ENCODE measurements at regions of chr9 and their contacts with region 1.

Region 1: DNA sequence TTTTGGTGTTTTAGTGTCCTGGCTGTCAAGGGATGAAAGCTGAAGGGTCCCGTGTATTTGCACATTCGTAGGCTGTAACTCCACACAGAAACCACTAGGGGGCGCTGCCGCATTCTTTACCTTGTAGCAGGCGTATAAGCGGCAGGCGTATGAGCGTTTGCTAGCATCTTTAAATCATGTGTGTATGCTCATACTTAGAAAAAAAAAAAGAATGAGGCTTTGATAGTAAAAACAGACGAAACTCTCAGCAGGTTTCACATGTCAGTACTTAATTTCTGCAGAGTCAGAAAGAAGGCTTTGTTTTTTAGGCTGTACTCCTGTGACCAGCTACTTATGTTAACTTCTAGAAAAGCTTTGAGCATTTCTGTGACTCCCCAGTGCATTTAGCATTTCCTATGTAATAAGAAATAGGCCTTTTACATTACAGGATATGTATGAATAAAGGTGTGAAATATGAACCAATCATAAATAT is 218.8 kb upstream of the ADAMTSL1 start:
- DNase-seq: peak; percentile 84
- H3K4me3 ChIP-seq: no peak overlapping the region
- H3K27ac ChIP-seq: no peak overlapping the region
- H3K4me1 ChIP-seq: peaks cover 2% of the 10 kb centered on the region
- H3K27me3 ChIP-seq: no peaks in the 10 kb centered on the region
- CTCF ChIP-seq: peak; percentile 76 to 81
- POLR2A ChIP-seq: no peak

Region 2: DNA sequence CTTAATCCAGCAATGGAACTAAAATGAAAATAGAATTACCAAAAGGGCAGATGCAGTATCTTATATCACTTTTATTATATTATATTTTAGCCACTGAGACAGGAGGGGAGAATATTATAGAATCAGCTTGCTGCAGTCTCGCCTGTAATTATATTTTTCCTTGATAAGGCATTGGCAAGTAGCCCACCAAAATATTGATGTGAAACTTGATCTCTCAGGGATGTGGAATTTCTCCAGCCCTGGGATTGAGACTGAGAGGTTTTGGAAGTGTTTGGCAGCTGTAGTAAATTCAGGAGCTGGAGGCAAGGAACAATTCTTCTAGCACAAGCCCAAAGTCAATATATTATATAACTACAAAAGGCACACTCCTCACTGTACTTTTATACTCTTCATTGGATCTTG is 76.6 kb after region 1 on chr9:
- CTCF ChIA-PET with region 1: interaction called, 14 read pairs
- POLR2A ChIA-PET with region 1: no interaction called
- dilution Hi-C with region 1: no loop called
- intact Hi-C with region 1: loop called (anchors 1 kb)
- DNase-seq: peak; percentile 99
- H3K4me3 ChIP-seq: no peak overlapping the region
- H3K27ac ChIP-seq: peak overlapping the region; percentile 85
- H3K4me1 ChIP-seq: peaks cover 40% of the 10 kb centered on the region
- H3K27me3 ChIP-seq: no peaks in the 10 kb centered on the region
- CTCF ChIP-seq: no peak
- POLR2A ChIP-seq: peak; percentile 57

Region 3: GRCh38 chr9:18437315-18438201 is 182.4 kb after region 1 on chr9:
- CTCF ChIA-PET with region 1: interaction called, 188 read pairs
- POLR2A ChIA-PET with region 1: interaction called, 4 read pairs
- dilution Hi-C with region 1: loop called (anchors 25 kb)
- intact Hi-C with region 1: loop called (anchors 1 kb)
- DNase-seq: peak; percentile 89
- H3K4me3 ChIP-seq: peak overlapping the region in 2 of 3 experiments; percentile 32 to 52
- H3K27ac ChIP-seq: peak overlapping the region; percentile 96
- H3K4me1 ChIP-seq: peaks cover 29% of the 10 kb centered on the region
- H3K27me3 ChIP-seq: no peaks in the 10 kb centered on the region
- CTCF ChIP-seq: no peak
- POLR2A ChIP-seq: no peak

Region 4: DNA sequence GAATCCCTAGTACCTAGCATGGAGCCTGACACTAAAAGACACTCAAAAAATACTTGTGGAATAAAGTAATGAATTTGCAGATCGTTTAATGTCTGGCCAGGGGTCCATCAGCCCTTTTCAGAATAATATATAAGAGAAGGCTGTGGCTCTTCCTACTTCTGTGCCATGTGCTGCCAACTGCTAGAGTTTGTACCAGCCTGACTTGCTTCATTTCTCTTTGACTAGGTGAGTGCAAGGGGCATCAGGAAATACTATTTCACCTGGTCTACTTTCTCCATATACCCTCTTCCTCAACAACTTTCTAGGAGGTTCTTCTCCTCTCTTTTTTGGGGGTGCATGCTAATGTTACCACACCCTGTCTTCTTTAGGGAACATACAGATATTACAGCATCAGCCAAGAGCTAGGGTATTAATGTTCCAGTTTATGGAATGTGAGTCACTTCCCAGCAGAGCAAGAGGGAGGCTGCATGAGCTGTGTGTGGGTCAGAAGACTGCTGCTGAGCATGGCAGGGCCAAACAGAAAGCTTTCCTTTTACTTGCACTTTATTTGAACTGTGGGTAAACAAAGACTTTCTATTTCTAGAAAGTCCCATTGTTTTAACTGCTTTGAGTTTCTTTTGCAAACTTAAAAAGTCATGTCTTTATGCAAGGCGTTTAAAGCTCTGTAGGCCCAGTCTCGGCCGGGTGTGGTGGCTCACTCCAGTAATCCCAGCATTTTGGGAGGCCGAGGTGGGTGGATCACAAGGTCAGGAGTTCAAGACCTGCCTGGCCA is 377.6 kb after region 1 on chr9:
- CTCF ChIA-PET with region 1: interaction called, 9 read pairs
- POLR2A ChIA-PET with region 1: no interaction called
- dilution Hi-C with region 1: no loop called
- intact Hi-C with region 1: loop called (anchors 5 kb)
- DNase-seq: peak; percentile 96
- H3K4me3 ChIP-seq: no peak overlapping the region
- H3K27ac ChIP-seq: peak overlapping the region; percentile 81
- H3K4me1 ChIP-seq: peaks cover 39% of the 10 kb centered on the region
- H3K27me3 ChIP-seq: no peaks in the 10 kb centered on the region
- CTCF ChIP-seq: no peak
- POLR2A ChIP-seq: no peak

Region 5: DNA sequence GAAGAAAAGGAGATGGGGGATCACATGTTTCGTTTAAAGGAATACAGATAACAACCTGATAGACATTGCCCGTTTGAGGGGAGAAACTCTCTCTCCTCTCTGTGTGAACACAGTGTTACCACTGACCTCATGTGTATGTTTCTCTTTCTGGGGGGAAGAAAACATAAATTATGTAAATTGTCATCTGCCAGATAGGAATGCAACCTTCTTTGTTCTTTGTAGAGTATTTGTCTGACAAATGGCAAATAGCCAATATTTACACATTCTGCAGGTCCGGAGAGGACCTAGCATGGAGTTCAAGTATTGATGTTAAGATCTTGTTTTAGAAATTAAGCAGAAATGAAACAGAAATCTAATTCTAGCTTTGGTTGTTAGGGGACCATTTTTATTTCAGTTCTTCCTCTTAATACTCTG is 501.5 kb after region 1 on chr9:
- CTCF ChIA-PET with region 1: no interaction called
- POLR2A ChIA-PET with region 1: no interaction called
- dilution Hi-C with region 1: no loop called
- intact Hi-C with region 1: no loop called
- DNase-seq: peak; percentile 69
- H3K4me3 ChIP-seq: no peak overlapping the region
- H3K27ac ChIP-seq: no peak overlapping the region
- H3K4me1 ChIP-seq: peaks cover 6% of the 10 kb centered on the region
- H3K27me3 ChIP-seq: no peaks in the 10 kb centered on the region
- CTCF ChIP-seq: no peak
- POLR2A ChIP-seq: no peak

Region 6: DNA sequence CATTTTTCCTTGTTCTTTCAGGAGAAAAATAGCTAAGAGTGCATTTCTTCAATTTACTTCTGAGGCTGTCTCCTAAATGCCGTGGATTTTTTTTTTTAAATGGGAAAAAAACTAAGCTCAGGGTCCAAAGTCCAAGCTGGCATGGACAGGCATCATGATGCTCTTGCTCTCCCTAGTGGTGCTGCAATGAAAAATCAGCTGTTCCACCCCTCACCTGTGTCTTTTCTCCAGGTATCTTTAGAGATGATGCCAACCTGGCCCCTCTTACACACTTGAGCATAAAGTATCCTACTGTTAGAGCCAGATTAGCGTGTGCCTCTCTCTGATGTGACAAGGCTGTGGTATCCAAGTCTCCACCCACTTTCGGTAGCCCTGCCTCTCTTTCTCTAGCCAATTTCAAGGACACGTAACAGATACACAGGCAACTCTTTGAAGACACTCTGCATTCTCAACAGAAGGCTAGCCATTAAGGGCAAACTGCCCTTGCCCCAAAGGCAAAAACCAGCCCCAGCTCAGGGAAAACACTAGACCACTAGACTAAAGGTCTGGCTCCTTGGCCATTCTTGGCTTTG is 569.0 kb after region 1 on chr9:
- CTCF ChIA-PET with region 1: interaction called, 12 read pairs
- POLR2A ChIA-PET with region 1: no interaction called
- dilution Hi-C with region 1: no loop called
- intact Hi-C with region 1: loop called (anchors 1 kb)
- DNase-seq: peak; percentile 31
- H3K4me3 ChIP-seq: no peak overlapping the region
- H3K27ac ChIP-seq: no peak overlapping the region
- H3K4me1 ChIP-seq: peaks cover 3% of the 10 kb centered on the region
- H3K27me3 ChIP-seq: no peaks in the 10 kb centered on the region
- CTCF ChIP-seq: peak in 1 of 2 donors; percentile 53
- POLR2A ChIP-seq: no peak

Region 7: GRCh38 chr9:19028835-19029451 is 773.7 kb after region 1 on chr9:
- CTCF ChIA-PET with region 1: interaction called, 16 read pairs
- POLR2A ChIA-PET with region 1: no interaction called
- dilution Hi-C with region 1: no loop called
- intact Hi-C with region 1: loop called (anchors 1 kb)
- DNase-seq: peak; percentile 59
- H3K4me3 ChIP-seq: no peak overlapping the region
- H3K27ac ChIP-seq: no peak overlapping the region
- H3K4me1 ChIP-seq: no peaks in the 10 kb centered on the region
- H3K27me3 ChIP-seq: no peaks in the 10 kb centered on the region
- CTCF ChIP-seq: peak; percentile 58 to 66
- POLR2A ChIP-seq: no peak